ENCODE measurements at regions of chr18 and their contacts with region 1.

Region 1: GRCh38 chr18:55790296-55790695 is 202.3 kb upstream of the TCF4 start:
- DNase-seq: no peak
- ATAC-seq: peak in 1 of 4 donors; percentile 63
- H3K4me3 ChIP-seq: no peak overlapping the region
- H3K27ac ChIP-seq: no peak overlapping the region
- H3K4me1 ChIP-seq: peaks cover 0 to 16% (median 2%) of the 10 kb centered on the region in 12 donors
- H3K27me3 ChIP-seq: no peaks in the 10 kb centered on the region
- CTCF ChIP-seq: no peak
- POLR2A ChIP-seq: no peak

Region 2: DNA sequence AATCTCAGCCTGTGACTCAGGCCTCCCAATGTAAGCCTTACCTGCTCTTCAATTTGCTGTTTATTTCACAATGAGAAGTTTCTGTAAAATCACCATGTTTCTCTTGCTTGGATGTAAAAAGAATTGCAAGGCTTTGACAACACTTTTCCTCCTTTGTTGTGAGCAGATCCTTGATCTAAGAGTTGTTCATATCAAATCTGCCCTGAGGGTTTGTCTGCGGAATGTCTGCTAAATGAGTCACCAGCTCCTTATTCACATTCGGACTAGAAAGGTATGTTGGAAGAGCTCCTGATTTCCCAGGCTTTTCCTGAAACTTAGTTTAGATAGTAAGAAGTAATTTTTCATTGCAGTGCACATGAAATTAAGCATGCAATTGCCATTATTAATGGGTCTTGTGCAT is 65.9 kb after region 1 on chr18:
- intact Hi-C with region 1: loop called in 1 of 10 experiments (anchors 10 kb)
- DNase-seq: no peak
- ATAC-seq: no peak
- H3K4me3 ChIP-seq: no peak overlapping the region
- H3K27ac ChIP-seq: no peak overlapping the region
- H3K4me1 ChIP-seq: peaks cover 0 to 5% (median 0%) of the 10 kb centered on the region in 12 donors
- H3K27me3 ChIP-seq: no peaks in the 10 kb centered on the region
- CTCF ChIP-seq: no peak
- POLR2A ChIP-seq: no peak

Measured in heart left ventricle (tissue), 16 donors.